ENCODE measurements at regions of chr1 and their contacts with region 1.

Region 1: DNA sequence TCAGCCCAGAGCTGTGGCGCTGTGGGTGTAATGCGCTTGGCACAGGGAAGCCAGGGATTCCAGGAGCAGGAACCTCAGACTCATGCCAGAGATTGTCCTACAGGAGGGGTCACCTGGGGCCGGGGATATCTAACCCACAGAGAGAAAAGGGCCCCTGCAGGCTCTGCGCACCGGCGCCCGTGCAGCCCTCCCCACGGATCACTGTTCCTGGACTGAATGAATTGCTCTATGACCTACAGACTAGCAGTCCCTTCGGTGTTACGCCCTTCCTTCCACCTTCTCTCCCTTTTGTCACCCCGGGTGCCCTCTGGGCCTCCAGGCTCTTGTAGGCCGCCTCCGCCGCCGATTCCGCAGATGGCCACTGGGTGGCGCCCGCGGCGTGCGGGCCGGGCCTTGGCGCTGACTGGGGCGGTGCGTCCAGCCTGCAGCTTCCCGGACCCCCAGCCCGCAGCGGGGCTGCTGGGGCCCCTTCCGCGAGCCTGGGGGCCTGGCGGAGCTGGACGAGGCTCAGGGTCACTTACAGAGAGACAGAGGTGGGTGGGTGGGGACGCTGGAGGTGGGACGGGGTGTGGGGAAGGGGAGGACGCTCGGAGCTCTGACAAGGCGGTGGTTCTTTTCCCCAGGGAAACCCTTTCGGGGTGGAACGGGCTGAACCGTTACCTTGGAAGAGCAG is 101.3 kb downstream of the IER5 start:
- DNase-seq: peak; percentile 36 to 77
- ATAC-seq: peak; percentile 89 to 93 (median 92)
- H3K4me3 ChIP-seq: peak overlapping the region in 8 of 10 donors; percentile 18 to 46 (median 34)
- H3K27ac ChIP-seq: peak overlapping the region in 2 of 10 donors; percentile 7 to 12
- H3K4me1 ChIP-seq: peaks cover 0 to 12% (median 10%) of the 10 kb centered on the region in 9 donors
- H3K27me3 ChIP-seq: peaks cover 0 to 30% (median 9%) of the 10 kb centered on the region in 7 donors
- CTCF ChIP-seq: peak; percentile 86 to 97 (median 95)

Region 2: GRCh38 chr1:181324797-181325616 is 135.2 kb after region 1 on chr1:
- intact Hi-C with region 1: loop called in 1 of 10 experiments (anchors 10 kb)
- DNase-seq: no peak
- ATAC-seq: peak in 1 of 8 donors; percentile 58
- H3K4me3 ChIP-seq: no peak overlapping the region
- H3K27ac ChIP-seq: peak overlapping the region in 1 of 10 donors; percentile 33
- H3K4me1 ChIP-seq: peaks cover 0 to 6% (median 0%) of the 10 kb centered on the region in 9 donors
- H3K27me3 ChIP-seq: peaks cover under 1 to 52% (median 25%) of the 10 kb centered on the region in 7 donors
- CTCF ChIP-seq: no peak

Region 3: DNA sequence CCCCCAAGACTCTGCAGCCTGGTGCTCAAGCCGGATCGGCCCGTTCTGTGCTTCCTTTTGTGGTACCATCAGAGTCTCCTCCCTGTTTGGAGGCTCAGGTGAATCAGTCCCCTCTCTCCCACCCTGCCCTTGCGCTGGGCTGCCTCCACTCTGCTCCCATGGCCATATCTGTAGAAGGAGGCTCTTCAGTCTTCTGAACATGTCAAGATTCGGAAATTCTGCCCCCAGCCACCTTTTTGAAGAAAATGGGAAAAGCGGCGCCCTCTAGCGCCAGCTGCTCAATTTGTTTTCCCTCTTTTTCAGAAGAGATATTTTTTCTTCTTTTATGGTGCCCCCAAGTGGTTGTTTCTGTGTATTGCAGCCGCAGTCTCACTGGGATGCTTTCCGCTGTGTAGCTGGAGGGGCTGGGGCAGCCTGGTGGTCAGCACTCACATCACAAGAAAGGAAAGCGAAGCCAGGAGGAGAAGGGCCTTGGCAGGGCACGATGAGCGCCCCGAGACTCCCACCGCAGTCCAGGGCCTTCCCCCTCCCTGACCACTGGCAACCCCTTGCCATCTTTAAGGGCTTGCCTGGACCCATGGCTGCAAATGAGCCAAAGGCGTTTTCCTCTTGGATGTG is 235.1 kb after region 1 on chr1:
- intact Hi-C with region 1: loop called (anchors 1 to 2 kb)
- DNase-seq: peak; percentile 54 to 62
- ATAC-seq: peak in 7 of 8 donors; percentile 16 to 64 (median 56)
- H3K4me3 ChIP-seq: no peak overlapping the region
- H3K27ac ChIP-seq: no peak overlapping the region
- H3K4me1 ChIP-seq: peaks cover 0 to 5% (median 0%) of the 10 kb centered on the region in 9 donors
- H3K27me3 ChIP-seq: peaks cover 0 to 51% (median 17%) of the 10 kb centered on the region in 7 donors
- CTCF ChIP-seq: peak; percentile 79 to 98 (median 98)

Measured in heart right ventricle (tissue), 16 donors.